ENCODE measurements at regions of chr13 and their contacts with region 1.

Region 1: GRCh38 chr13:103130681-103131210 is 64.5 kb upstream of the SLC10A2 start:
- DNase-seq: no peak
- ATAC-seq: no peak
- H3K4me3 ChIP-seq: no peak overlapping the region
- H3K27ac ChIP-seq: no peak overlapping the region
- H3K4me1 ChIP-seq: no peaks in the 10 kb centered on the region
- H3K27me3 ChIP-seq: no peaks in the 10 kb centered on the region
- CTCF ChIP-seq: no peak
- POLR2A ChIP-seq: no peak

Region 2: DNA sequence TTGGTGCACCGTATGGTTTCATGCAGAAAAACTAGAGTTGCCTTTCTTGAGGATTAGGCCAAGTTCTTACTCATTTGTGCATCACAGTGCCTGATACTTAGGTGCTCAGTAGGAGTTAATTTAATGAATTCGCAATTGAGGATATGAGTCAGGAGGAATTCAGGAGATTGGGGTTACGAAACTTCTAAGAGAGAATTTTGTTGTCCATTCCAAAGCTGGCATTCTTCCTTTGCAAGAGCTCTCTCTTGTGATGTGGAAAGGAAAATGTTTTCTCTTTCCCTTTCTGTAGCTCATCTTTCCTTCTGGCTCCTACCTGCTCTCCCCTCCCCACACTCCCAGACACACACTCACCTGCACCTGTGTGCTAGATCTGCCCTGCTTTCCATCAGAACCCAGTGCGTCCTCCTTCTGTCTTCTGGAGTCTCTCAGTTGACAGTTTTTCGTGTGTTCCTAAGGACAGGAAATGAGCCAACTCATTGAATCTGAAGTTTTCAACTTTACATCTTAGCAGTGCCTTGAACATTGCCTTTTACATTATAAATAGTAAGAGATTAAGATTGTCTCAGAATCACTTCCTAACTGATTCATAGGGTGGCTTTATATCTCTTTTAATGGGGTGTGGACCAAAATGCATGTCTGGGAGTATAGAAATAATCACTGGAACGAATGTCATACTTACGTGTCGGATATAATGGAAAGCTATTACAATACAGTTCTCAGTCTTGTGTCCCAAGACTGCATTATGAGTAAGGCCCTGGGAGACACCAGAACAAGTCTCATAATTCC is 304.6 kb before region 1 on chr13:
- intact Hi-C with region 1: no loop called
- DNase-seq: no peak
- ATAC-seq: no peak
- H3K4me3 ChIP-seq: no peak overlapping the region
- H3K27ac ChIP-seq: no peak overlapping the region
- H3K4me1 ChIP-seq: peaks cover 0 to 8% (median 1%) of the 10 kb centered on the region in 12 donors
- H3K27me3 ChIP-seq: no peaks in the 10 kb centered on the region
- CTCF ChIP-seq: no peak
- POLR2A ChIP-seq: no peak

Region 3: GRCh38 chr13:102928941-102929675 is 201.6 kb before region 1 on chr13:
- intact Hi-C with region 1: loop called in 1 of 10 experiments (anchors 10 kb)
- DNase-seq: no peak
- ATAC-seq: no peak
- H3K4me3 ChIP-seq: no peak overlapping the region
- H3K27ac ChIP-seq: no peak overlapping the region
- H3K4me1 ChIP-seq: no peaks in the 10 kb centered on the region
- H3K27me3 ChIP-seq: no peaks in the 10 kb centered on the region
- CTCF ChIP-seq: no peak
- POLR2A ChIP-seq: no peak

Region 4: DNA sequence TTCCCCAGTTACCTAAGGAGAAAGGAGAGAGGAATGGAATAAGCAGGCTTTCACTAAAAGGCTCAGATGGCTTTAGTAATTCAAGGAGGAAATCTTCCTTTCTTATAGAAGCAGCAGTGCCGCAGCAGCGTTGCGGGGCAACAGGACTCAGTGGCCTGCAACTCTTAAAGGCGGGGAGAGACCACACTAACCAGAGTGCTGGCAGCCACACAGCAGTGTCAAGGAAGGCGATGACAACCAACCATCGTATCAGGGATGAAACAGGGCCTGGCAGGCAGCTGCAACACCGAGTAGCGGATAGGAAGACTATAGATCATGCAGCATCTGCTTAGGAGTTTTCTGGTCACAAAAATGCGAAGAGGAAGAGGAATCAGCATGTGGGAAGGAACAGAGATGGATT is 178.9 kb before region 1 on chr13:
- intact Hi-C with region 1: loop called in 1 of 10 experiments (anchors 10 kb)
- DNase-seq: peak in 1 of 5 donors; percentile 24
- ATAC-seq: no peak
- H3K4me3 ChIP-seq: no peak overlapping the region
- H3K27ac ChIP-seq: no peak overlapping the region
- H3K4me1 ChIP-seq: no peaks in the 10 kb centered on the region
- H3K27me3 ChIP-seq: no peaks in the 10 kb centered on the region
- CTCF ChIP-seq: no peak
- POLR2A ChIP-seq: no peak

Region 5: DNA sequence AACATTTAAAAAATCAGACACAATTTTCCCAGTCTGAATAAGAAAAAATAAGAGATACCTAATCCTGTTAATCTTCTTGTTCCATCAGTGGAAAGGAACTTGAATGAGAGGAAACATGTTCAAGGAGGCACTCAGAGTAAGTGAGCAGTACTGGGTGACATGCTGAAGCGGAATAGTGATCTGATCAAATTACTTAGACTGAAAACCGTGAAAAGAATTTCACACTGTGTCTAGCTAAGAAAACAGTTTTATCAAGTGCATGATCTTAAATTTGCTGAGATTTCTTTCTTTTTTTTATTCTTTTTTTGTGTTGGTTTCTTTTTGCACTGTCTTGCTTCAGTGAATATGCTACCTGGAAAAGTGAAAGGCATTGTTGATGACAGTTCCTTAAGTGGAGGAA is 185.0 kb after region 1 on chr13:
- intact Hi-C with region 1: no loop called
- DNase-seq: no peak
- ATAC-seq: no peak
- H3K4me3 ChIP-seq: no peak overlapping the region
- H3K27ac ChIP-seq: no peak overlapping the region
- H3K4me1 ChIP-seq: no peaks in the 10 kb centered on the region
- H3K27me3 ChIP-seq: no peaks in the 10 kb centered on the region
- CTCF ChIP-seq: no peak
- POLR2A ChIP-seq: no peak

Measured in heart left ventricle (tissue), 16 donors.